Head of caudate nucleus (tissue), 42 donors: ENCODE measurements at regions of chr7 and their contacts with region 1.

Region 1: GRCh38 chr7:954330-955238 is at the start of gene ADAP1:
- DNase-seq: peak in 39 of 42 donors; percentile 27 to 86 (median 67)

Region 2: GRCh38 chr7:909358-910329 is 44.9 kb before region 1 on chr7:
- intact Hi-C with region 1: loop called (anchors 2 kb)
- DNase-seq: peak in 32 of 42 donors; percentile 46 to 81 (median 67)

Region 3: GRCh38 chr7:1193593-1194424 is 239.2 kb after region 1 on chr7:
- intact Hi-C with region 1: no loop called
- DNase-seq: peak; percentile 51 to 86 (median 72)